CD8-positive, alpha-beta T cell (primary cell): ENCODE measurements at regions of chr5 and their contacts with region 1.

Region 1: GRCh38 chr5:157743163-157744050 is at the start of gene LSM11:
- DNase-seq: peak; percentile 84 to 97 (median 91)
- ATAC-seq: peak; percentile 98
- H3K4me3 ChIP-seq: peak within 1 kb of the TSS; percentile 53 to 70
- H3K4me3 Mint-ChIP-seq: peak within 1 kb of the TSS; percentile 92
- H3K27ac ChIP-seq: no peak within 1 kb of the TSS
- H3K27ac Mint-ChIP-seq: peak within 1 kb of the TSS; percentile 86
- H3K4me1 ChIP-seq: peaks cover 13% of the 10 kb centered on the region
- H3K4me1 Mint-ChIP-seq: peaks cover 26% of the 10 kb centered on the region
- H3K27me3 ChIP-seq: no peaks in the 10 kb centered on the region
- H3K27me3 Mint-ChIP-seq: no peaks in the 10 kb centered on the region
- CTCF ChIP-seq: peak; percentile 99
- total RNA-seq, gene LSM11: 0.44 to 0.65 TPM

Region 2: DNA sequence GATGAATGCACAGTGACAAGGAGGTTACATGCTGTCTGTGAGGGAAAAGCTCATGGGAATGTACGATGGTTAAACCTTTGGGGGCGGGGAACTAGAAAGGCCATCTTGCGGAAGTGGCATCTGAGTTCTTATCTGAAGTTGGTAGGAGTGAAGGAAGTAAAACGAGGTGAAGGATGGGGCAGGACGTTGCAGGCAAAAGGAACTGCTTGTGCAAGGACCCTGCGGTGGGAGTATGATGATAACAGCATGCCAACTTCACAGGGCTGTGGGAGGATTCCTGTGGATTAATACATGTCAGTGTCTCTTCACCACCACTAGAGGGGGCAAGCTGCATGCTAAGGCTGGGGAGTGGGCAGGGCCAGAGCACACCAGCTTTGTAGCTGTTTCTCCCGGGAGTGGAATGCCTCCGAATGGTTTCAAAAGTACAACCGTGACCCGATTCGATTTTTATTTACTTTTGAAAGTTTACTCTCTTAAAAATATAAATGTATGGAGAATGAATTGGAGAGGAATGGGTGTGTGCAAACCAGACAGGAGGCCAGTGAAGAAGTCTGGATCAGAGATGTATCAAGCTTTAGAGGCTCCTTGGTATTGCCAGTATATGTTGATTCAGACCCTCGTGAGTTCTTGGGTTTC is 415.0 kb before region 1 on chr5:
- CTCF ChIA-PET with region 1: interaction called, 10 read pairs
- POLR2A ChIA-PET with region 1: no interaction called
- intact Hi-C with region 1: loop called (anchors 1 kb)
- DNase-seq: peak in 7 of 9 experiments; percentile 27 to 83 (median 60)
- ATAC-seq: peak; percentile 95
- H3K4me3 ChIP-seq: no peak overlapping the region
- H3K4me3 Mint-ChIP-seq: peak overlapping the region; percentile 47
- H3K27ac ChIP-seq: peak overlapping the region in 1 of 2 experiments; percentile 37
- H3K27ac Mint-ChIP-seq: peak overlapping the region; percentile 95
- H3K4me1 ChIP-seq: peaks cover 28% of the 10 kb centered on the region
- H3K4me1 Mint-ChIP-seq: peaks cover 34% of the 10 kb centered on the region
- H3K27me3 ChIP-seq: no peaks in the 10 kb centered on the region
- H3K27me3 Mint-ChIP-seq: no peaks in the 10 kb centered on the region
- CTCF ChIP-seq: peak; percentile 83

Region 3: GRCh38 chr5:157431544-157432200 is 311.7 kb before region 1 on chr5:
- CTCF ChIA-PET with region 1: interaction called, 16 read pairs
- POLR2A ChIA-PET with region 1: no interaction called
- intact Hi-C with region 1: loop called (anchors 1 kb)
- DNase-seq: peak in 2 of 9 experiments; percentile 60 to 66
- ATAC-seq: peak; percentile 55
- H3K4me3 ChIP-seq: no peak overlapping the region
- H3K4me3 Mint-ChIP-seq: no peak overlapping the region
- H3K27ac ChIP-seq: no peak overlapping the region
- H3K27ac Mint-ChIP-seq: no peak overlapping the region
- H3K4me1 ChIP-seq: no peaks in the 10 kb centered on the region
- H3K4me1 Mint-ChIP-seq: peaks cover 2% of the 10 kb centered on the region
- H3K27me3 ChIP-seq: no peaks in the 10 kb centered on the region
- H3K27me3 Mint-ChIP-seq: peaks cover 13% of the 10 kb centered on the region
- CTCF ChIP-seq: peak; percentile 44

Region 4: GRCh38 chr5:157511651-157512644 is 231.5 kb before region 1 on chr5:
- CTCF ChIA-PET with region 1: no interaction called
- POLR2A ChIA-PET with region 1: no interaction called
- intact Hi-C with region 1: no loop called
- DNase-seq: no peak
- ATAC-seq: no peak
- H3K4me3 ChIP-seq: no peak overlapping the region
- H3K4me3 Mint-ChIP-seq: no peak overlapping the region
- H3K27ac ChIP-seq: no peak overlapping the region
- H3K27ac Mint-ChIP-seq: no peak overlapping the region
- H3K4me1 ChIP-seq: no peaks in the 10 kb centered on the region
- H3K4me1 Mint-ChIP-seq: no peaks in the 10 kb centered on the region
- H3K27me3 ChIP-seq: no peaks in the 10 kb centered on the region
- H3K27me3 Mint-ChIP-seq: no peaks in the 10 kb centered on the region
- CTCF ChIP-seq: no peak

Region 5: GRCh38 chr5:157582731-157583620 is 160.4 kb before region 1 on chr5:
- CTCF ChIA-PET with region 1: no interaction called
- POLR2A ChIA-PET with region 1: no interaction called
- intact Hi-C with region 1: no loop called
- DNase-seq: no peak
- ATAC-seq: no peak
- H3K4me3 ChIP-seq: no peak overlapping the region
- H3K4me3 Mint-ChIP-seq: no peak overlapping the region
- H3K27ac ChIP-seq: no peak overlapping the region
- H3K27ac Mint-ChIP-seq: no peak overlapping the region
- H3K4me1 ChIP-seq: no peaks in the 10 kb centered on the region
- H3K4me1 Mint-ChIP-seq: no peaks in the 10 kb centered on the region
- H3K27me3 ChIP-seq: no peaks in the 10 kb centered on the region
- H3K27me3 Mint-ChIP-seq: no peaks in the 10 kb centered on the region
- CTCF ChIP-seq: no peak

Region 6: DNA sequence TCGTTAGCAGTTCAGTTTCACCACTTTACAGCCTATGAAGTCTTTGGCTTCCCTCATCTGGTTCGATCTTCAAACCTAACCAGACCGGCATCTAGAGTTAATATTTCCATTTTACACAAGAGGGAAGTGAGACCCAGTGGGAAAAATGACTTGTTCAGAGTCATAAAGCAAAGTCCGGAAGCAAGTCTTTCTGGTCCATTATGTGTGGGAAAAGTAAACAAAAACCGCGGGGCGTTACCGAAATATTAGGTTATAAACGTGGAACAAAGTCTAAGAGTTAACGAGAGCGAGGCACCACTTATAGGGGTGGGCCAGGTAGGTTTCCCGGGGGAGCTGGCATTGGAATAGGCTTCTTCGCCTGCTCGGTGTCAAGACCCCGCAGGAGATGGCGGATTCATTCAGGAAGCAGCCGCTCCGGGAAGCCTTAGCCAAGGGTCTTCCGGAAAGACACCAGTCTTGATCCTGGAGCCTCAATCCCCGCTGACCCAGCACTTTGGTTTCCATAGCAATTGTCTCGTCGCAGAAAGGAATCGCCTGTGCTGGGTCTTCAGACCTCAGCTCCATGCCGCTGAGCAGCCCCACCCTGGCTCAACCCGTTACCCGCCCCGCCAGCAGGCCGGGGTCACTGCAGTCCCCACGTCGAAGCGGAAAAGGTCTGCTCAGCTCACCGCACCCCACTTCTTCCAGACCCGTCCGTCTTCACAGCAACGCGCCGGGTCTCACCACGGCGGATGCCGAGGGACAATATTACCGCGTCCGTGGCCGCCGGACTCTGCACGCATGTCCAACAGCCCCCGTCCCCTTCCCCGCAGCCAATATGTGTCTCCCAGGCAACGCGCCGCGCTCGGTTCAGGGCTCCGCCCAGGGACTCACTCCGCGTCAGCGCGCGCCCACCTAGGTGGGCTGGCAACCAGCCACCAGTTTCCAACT is 72.5 kb before region 1 on chr5 and contains the start of gene C5orf52:
- CTCF ChIA-PET with region 1: interaction called, 6 read pairs
- POLR2A ChIA-PET with region 1: no interaction called
- intact Hi-C with region 1: loop called (anchors 1 to 2 kb)
- DNase-seq: peak in 3 of 9 experiments; percentile 11 to 17 (median 14)
- ATAC-seq: no peak
- H3K4me3 ChIP-seq: peak within 1 kb of the TSS; percentile 44
- H3K4me3 Mint-ChIP-seq: peak within 1 kb of the TSS; percentile 85
- H3K27ac ChIP-seq: no peak within 1 kb of the TSS
- H3K27ac Mint-ChIP-seq: no peak within 1 kb of the TSS
- H3K4me1 ChIP-seq: peaks cover 18% of the 10 kb centered on the region
- H3K4me1 Mint-ChIP-seq: peaks cover 24% of the 10 kb centered on the region
- H3K27me3 ChIP-seq: peaks cover 14 to 25% of the 10 kb centered on the region in 2 experiments
- H3K27me3 Mint-ChIP-seq: peaks cover 41% of the 10 kb centered on the region
- CTCF ChIP-seq: no peak
- total RNA-seq, gene C5orf52: not detected

Region 7: GRCh38 chr5:157761690-157762621 is 18.5 kb after region 1 on chr5:
- CTCF ChIA-PET with region 1: interaction called, 11 read pairs
- POLR2A ChIA-PET with region 1: no interaction called
- intact Hi-C with region 1: no loop called
- DNase-seq: peak in 3 of 9 experiments; percentile 18 to 62 (median 54)
- ATAC-seq: peak; percentile 84
- H3K4me3 ChIP-seq: no peak overlapping the region
- H3K4me3 Mint-ChIP-seq: no peak overlapping the region
- H3K27ac ChIP-seq: no peak overlapping the region
- H3K27ac Mint-ChIP-seq: no peak overlapping the region
- H3K4me1 ChIP-seq: no peaks in the 10 kb centered on the region
- H3K4me1 Mint-ChIP-seq: peaks cover 4% of the 10 kb centered on the region
- H3K27me3 ChIP-seq: no peaks in the 10 kb centered on the region
- H3K27me3 Mint-ChIP-seq: no peaks in the 10 kb centered on the region
- CTCF ChIP-seq: peak; percentile 77